Right ventricle myocardium superior (tissue), 1 donor: ENCODE measurements at regions of chr1 and their contacts with region 1.

Region 1: DNA sequence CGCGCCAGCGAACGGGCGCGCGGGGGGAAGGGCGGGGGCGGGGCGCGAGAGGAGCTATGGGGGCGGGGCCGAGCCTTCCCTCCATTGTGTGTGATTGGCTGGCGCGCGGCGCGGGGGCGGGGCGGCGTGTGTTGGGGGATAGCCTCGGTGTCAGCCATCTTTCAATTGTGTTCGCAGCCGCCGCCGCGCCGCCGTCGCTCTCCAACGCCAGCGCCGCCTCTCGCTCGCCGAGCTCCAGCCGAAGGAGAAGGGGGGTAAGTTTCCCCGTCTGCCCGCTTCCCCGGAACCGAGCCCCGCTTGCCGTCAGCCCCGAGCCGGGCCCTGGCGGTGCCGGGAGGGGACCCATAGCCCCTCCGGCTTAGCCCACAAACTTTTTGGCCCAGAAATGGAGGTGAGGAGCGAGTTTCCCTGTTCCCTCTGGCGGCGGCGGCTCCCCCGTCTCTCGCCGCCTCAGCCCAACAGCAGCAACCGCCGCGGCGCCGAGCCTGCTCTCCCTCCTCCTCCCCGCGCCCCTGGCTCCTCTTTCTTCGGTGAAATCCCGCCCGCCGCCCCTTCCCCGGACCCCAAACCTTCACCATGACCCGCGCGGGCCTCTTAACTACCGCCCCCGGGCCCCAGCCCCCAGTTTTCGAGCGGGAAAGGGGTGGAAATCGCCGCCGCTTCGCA is at the start of gene H3-3A:
- DNase-seq: peak; percentile 100
- ATAC-seq: peak; percentile 92
- total RNA-seq, gene H3-3A: 271 TPM

Region 2: DNA sequence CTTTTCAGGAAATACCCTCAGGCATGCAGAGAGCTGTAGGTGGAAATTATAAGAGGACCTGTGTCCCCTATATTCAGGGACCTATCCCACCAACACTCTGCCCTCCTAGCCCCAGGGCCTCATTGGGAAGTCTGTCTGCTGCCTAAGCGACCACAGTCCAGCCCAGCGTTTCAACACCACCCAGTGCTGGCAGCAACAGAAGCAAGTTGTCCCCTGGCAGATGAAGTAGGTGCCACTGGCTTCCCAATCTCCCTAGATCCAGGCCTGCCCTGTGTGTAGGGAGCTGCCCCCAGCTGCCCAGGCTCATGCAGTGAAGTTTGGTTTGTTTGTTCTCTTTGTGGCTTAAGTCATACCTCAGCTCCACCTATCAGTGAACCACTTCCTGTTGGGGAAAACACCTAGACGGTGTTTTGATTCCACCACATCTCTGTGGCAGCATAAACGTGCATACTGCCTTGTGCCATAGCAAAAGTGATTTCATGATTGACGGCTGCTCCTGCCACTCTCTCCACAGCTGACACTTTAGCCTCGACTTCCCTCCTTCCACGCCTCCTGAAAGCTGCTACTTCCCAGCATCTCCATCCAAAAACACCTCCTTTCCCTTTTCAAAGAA is 165.6 kb before region 1 on chr1:
- intact Hi-C with region 1: no loop called
- DNase-seq: peak; percentile 38
- ATAC-seq: peak; percentile 34

Region 3: DNA sequence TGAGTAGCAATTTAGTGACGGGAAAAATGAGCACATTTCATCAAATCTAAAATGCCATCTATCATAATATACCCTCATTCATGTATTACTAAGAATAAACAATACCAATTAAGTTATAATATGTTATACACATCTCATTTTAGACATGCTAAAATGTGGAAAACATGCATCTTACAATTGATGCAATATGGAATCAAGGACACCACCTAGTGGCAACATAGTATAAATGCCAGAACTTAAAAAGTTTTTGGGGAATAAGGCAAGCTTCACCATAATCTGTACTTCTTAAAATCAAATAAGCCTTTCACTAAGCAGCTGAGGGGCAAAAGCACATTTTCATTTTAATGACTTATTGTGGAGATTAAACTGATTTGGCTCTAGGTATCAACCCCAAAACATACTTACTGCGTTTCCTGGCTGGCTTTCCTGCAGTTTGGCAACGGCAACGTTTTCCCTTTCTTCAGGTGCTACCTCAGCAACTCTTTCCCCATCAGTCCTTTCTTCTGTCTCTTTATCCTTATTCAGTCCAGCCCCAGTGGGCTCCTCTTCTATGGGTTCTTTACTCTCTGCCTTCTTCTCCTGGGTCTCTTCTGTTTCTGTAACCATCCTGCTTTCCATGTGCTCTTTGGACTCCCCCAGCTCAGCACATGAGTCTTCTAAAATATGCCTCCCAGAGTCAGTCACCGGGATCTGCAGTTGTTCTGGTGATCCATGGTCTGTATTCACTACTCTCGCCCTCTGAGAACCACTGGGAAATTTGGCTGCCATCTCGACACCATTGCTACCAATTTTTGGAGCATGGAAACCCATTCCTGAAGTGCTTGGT is 75.0 kb before region 1 on chr1:
- intact Hi-C with region 1: no loop called
- DNase-seq: no peak
- ATAC-seq: no peak

Region 4: GRCh38 chr1:225999227-225999911 is 63.3 kb before region 1 on chr1 and contains the start of gene SDE2:
- intact Hi-C with region 1: loop called (anchors 5 kb)
- DNase-seq: peak; percentile 100
- ATAC-seq: peak; percentile 98
- total RNA-seq, gene SDE2: 9.4 TPM

Region 5: DNA sequence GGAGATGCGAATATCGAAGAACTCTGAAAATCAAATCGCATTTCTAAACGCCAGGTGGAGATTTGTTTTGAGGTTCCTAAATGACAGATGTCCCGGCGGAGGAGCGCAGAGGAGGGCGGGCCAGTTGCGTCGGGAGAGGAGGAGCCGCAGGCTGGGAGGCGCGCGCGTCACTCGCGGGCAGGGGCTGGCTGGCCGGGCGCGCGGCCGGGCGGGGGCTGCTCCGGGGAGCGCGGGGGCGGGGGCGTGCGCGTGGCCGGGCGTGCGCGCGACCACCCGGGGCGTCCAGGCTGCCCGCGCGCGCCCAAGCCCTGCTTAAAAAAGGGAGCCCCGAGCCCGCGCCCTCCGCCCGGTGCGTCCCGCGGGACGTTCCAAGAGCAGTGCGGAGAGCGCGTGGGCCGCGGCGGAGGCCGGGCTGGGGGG is 47.1 kb after region 1 on chr1:
- intact Hi-C with region 1: loop called (anchors 5 kb)
- DNase-seq: peak; percentile 94
- ATAC-seq: peak; percentile 90

Region 6: DNA sequence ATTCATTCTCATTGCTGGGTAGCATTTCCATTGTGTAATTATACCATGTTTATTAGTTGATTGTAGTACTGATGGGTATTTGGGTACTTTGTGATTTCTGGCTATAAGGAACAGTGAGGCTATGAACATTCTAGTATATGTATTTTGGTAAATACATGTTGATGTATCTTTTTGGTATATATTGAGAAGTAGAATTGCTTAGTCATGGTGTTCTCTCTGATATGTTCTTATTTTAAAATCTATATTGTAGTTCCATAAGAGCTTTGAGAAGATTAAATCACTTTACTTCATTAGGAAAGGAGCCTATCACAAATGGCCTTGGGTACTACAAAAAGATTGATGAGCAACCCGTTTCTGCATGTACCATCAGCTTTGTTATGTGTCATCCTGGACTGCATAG is 174.1 kb after region 1 on chr1:
- intact Hi-C with region 1: no loop called
- DNase-seq: no peak
- ATAC-seq: no peak